ENCODE measurements at regions of chr2 and their contacts with region 1.

Region 1: DNA sequence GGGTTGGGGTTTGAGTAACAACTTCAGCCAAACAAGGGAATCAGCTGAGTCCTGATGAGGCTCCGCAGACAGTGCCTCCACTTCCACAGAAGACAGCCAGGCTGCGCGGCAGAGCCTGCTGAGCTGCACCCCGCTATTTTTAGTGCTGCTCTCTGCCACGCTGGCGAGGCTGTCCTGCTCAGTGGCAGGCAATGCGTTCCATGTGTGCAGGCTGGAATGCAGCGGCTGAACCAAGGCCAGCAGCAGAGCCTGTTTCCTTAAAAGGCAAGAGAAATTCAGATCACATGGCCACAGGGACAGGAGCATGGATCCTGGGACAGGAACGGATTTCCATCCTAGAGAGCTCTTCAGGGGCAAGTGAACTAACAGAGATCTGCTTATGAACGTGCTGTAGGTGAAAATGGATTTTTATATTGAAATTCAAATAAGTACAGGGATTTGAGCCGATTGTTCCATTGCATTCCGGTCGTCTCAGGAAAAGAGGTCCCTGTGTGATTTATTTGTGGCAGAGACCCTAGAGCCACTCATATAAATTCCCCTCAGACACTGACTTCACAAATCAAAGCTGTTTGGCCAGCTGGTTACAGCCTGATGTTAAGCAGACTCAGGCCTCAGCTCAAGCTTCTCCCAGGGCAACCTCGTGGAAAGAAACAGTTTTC is 98.7 kb downstream of the COL6A3 start:
- DNase-seq: peak; percentile 89 to 95 (median 91)
- ATAC-seq: peak; percentile 93 to 98 (median 98)
- H3K4me3 ChIP-seq: no peak overlapping the region
- H3K27ac ChIP-seq: peak overlapping the region; percentile 85 to 95 (median 91)
- H3K4me1 ChIP-seq: peaks cover 0 to 40% (median 22%) of the 10 kb centered on the region in 12 donors
- H3K27me3 ChIP-seq: no peaks in the 10 kb centered on the region
- CTCF ChIP-seq: peak in 10 of 12 donors; percentile 22 to 74 (median 46)
- POLR2A ChIP-seq: peak in 1 of 2 donors; percentile 29

Region 2: GRCh38 chr2:237207646-237208045 is 107.7 kb before region 1 on chr2:
- intact Hi-C with region 1: loop called in 2 of 10 experiments (anchors 2 to 5 kb)
- DNase-seq: peak; percentile 78 to 92 (median 80)
- ATAC-seq: peak; percentile 86 to 91 (median 90)
- H3K4me3 ChIP-seq: no peak overlapping the region
- H3K27ac ChIP-seq: peak overlapping the region; percentile 28 to 85 (median 76)
- H3K4me1 ChIP-seq: peaks cover 0 to 58% (median 31%) of the 10 kb centered on the region in 12 donors
- H3K27me3 ChIP-seq: peaks cover 0 to 3% (median 0%) of the 10 kb centered on the region in 9 donors
- CTCF ChIP-seq: no peak
- POLR2A ChIP-seq: no peak

Region 3: GRCh38 chr2:237235383-237236095 is 79.8 kb before region 1 on chr2:
- intact Hi-C with region 1: loop called in 1 of 10 experiments (anchors 5 kb)
- DNase-seq: peak in 4 of 5 donors; percentile 74 to 81 (median 78)
- ATAC-seq: peak; percentile 91 to 98 (median 92)
- H3K4me3 ChIP-seq: no peak overlapping the region
- H3K27ac ChIP-seq: peak overlapping the region; percentile 37 to 84 (median 74)
- H3K4me1 ChIP-seq: peaks cover 0 to 47% (median 11%) of the 10 kb centered on the region in 12 donors
- H3K27me3 ChIP-seq: no peaks in the 10 kb centered on the region
- CTCF ChIP-seq: no peak
- POLR2A ChIP-seq: no peak

Region 4: GRCh38 chr2:237280229-237280628 is 35.1 kb before region 1 on chr2:
- intact Hi-C with region 1: loop called in 1 of 10 experiments (anchors 5 kb)
- DNase-seq: peak in 2 of 5 donors; percentile 40 to 73
- ATAC-seq: peak in 3 of 4 donors; percentile 58 to 78 (median 69)
- H3K4me3 ChIP-seq: no peak overlapping the region
- H3K27ac ChIP-seq: peak overlapping the region in 10 of 12 donors; percentile 17 to 79 (median 65)
- H3K4me1 ChIP-seq: peaks cover 0 to 26% (median 0%) of the 10 kb centered on the region in 12 donors
- H3K27me3 ChIP-seq: no peaks in the 10 kb centered on the region
- CTCF ChIP-seq: no peak
- POLR2A ChIP-seq: no peak

Region 5: DNA sequence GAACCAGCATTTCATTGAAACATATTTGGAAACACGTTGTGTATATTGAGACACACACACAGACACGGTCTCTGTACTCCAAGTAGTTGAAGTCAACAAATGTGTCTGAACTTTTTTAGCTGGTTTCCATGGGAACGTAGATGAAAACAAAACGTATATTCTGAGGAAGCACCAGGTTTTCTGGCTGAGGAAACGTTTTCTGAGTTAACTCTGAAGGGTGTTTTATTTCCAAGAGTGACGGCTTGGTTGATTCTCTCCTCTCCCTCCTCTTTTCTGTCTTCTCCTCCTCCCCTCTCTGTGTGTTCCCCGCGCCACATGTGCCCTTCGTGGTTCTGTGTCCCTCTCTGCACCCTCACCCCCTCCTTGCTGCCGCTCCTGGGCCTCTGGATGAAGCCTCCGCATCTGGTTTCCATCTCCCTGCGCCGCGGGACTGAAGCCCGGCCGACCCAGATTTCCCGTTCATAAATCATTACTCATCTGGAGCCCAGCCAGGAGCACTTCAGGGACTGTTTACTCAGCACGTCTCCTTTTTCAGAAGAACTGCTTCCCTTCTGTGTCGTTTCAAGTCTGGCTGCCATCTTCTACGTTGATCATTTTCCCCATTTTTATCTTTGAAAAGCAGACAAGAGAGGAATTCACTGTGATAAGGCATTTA is 24.0 kb before region 1 on chr2:
- intact Hi-C with region 1: loop called in 4 of 10 experiments (anchors 1 to 2 kb)
- DNase-seq: peak; percentile 93 to 99 (median 97)
- ATAC-seq: peak; percentile 95 to 97 (median 97)
- H3K4me3 ChIP-seq: peak overlapping the region in 5 of 12 donors; percentile 3 to 27 (median 11)
- H3K27ac ChIP-seq: peak overlapping the region; percentile 74 to 92 (median 84)
- H3K4me1 ChIP-seq: peaks cover 0 to 41% (median 27%) of the 10 kb centered on the region in 12 donors
- H3K27me3 ChIP-seq: no peaks in the 10 kb centered on the region
- CTCF ChIP-seq: no peak
- POLR2A ChIP-seq: peak in 1 of 2 donors; percentile 6

Region 6: DNA sequence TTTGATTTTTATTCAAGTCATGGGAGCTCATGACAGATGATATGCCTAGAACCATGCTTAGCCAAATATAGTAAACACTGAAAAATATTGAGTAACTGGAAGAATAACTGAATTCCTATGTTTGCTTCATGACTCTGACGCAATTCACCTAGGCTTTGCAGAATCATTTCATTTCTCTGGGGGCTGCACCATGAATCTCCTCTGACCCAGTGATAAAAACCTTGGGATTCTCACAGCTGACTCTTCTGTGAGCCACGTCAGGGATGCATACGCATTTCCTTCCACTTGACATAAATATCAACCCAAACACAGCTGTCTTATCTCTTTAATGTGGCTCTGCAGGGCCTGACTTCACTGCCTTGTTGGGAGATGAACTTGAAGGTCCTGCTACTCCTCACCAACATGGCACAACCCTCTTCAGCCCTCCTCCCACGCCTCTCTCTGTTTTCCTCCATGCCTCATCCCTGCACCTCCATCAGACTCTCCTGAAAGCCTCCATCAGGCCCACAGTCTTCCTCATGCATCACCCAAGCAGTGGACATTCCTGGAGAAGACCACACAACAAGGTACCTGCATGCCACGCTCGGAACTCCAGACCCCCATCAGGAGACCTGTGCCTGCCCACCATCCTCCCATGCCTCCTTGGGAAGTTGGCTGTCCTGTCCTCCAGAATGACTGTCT is 68.8 kb after region 1 on chr2:
- intact Hi-C with region 1: no loop called
- DNase-seq: no peak
- ATAC-seq: peak in 1 of 4 donors; percentile 28
- H3K4me3 ChIP-seq: no peak overlapping the region
- H3K27ac ChIP-seq: peak overlapping the region in 1 of 12 donors; percentile 82
- H3K4me1 ChIP-seq: no peaks in the 10 kb centered on the region
- H3K27me3 ChIP-seq: no peaks in the 10 kb centered on the region
- CTCF ChIP-seq: no peak
- POLR2A ChIP-seq: no peak

Measured in heart left ventricle (tissue), 16 donors.